Transverse colon (tissue), 4 donors: ENCODE measurements at regions of chr17 and their contacts with region 1.

Region 1: GRCh38 chr17:63611354-63611753 is 10.7 kb downstream of the TACO1 start:
- DNase-seq: no peak
- H3K4me3 ChIP-seq: no peak overlapping the region
- H3K27ac ChIP-seq: no peak overlapping the region
- H3K4me1 ChIP-seq: no peaks in the 10 kb centered on the region
- H3K27me3 ChIP-seq: no peaks in the 10 kb centered on the region
- CTCF ChIP-seq: no peak
- EP300 ChIP-seq: no peak
- POLR2A ChIP-seq: no peak

Region 2: GRCh38 chr17:63419949-63420867 is 191.1 kb before region 1 on chr17:
- in situ Hi-C with region 1: loop called in 3 of 4 experiments (anchors 5 to 10 kb)
- intact Hi-C with region 1: loop called (anchors 5 kb)
- DNase-seq: no peak
- H3K4me3 ChIP-seq: no peak overlapping the region
- H3K27ac ChIP-seq: no peak overlapping the region
- H3K4me1 ChIP-seq: no peaks in the 10 kb centered on the region
- H3K27me3 ChIP-seq: no peaks in the 10 kb centered on the region
- CTCF ChIP-seq: no peak
- EP300 ChIP-seq: no peak
- POLR2A ChIP-seq: no peak

Region 3: GRCh38 chr17:63425482-63425881 is 185.9 kb before region 1 on chr17:
- in situ Hi-C with region 1: loop called (anchors 5 to 10 kb)
- intact Hi-C with region 1: loop called (anchors 5 kb)
- DNase-seq: peak; percentile 74
- H3K4me3 ChIP-seq: no peak overlapping the region
- H3K27ac ChIP-seq: no peak overlapping the region
- H3K4me1 ChIP-seq: no peaks in the 10 kb centered on the region
- H3K27me3 ChIP-seq: no peaks in the 10 kb centered on the region
- CTCF ChIP-seq: peak; percentile 90 to 95 (median 94)
- EP300 ChIP-seq: no peak
- POLR2A ChIP-seq: no peak

Region 4: DNA sequence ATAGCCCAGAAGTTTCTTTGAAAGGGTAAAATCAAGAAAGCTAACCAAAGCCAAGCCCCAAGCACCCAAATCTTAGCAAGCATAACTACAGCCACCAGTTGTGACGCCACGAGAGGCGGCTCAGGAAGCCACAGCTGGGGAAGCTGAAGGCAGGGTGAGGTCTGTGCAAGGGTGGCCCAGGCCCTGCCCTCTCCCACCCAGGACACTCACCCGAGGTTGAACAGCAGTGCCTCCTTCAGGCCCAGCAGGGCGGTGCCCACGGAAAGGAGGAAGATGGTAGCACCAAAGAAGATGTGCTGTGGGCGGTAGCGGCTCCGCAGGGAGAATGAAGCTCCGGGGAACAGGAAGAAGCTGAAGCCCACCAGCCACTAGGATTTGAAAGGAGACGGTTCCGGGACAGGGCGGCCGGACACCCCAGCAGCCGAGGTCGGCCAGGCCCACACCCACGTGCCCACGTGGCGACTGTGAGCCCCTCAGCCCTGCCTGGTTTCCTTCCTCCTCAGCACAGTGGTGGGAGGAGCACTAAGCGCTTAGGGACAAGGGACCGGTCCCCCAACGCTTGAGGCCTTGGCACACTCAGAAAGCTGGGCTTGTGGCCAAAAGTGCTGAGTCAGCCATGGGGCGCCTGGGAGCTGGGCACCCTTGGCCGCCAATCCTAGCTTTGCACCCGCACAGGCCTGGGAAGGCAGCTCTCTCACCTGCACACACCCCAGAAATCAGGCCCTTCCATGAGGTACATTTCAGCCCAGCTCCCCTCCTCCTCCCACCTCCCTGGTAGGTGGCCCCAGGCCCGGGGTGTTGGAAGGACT is 176.3 kb before region 1 on chr17:
- in situ Hi-C with region 1: loop called in 1 of 4 experiments (anchors 5 kb)
- intact Hi-C with region 1: no loop called
- DNase-seq: peak; percentile 83
- H3K4me3 ChIP-seq: no peak overlapping the region
- H3K27ac ChIP-seq: peak overlapping the region; percentile 26 to 80 (median 77)
- H3K4me1 ChIP-seq: peaks cover 20 to 71% (median 54%) of the 10 kb centered on the region in 4 donors
- H3K27me3 ChIP-seq: no peaks in the 10 kb centered on the region
- CTCF ChIP-seq: peak in 2 of 5 experiments; percentile 11
- EP300 ChIP-seq: no peak
- POLR2A ChIP-seq: no peak

Region 5: DNA sequence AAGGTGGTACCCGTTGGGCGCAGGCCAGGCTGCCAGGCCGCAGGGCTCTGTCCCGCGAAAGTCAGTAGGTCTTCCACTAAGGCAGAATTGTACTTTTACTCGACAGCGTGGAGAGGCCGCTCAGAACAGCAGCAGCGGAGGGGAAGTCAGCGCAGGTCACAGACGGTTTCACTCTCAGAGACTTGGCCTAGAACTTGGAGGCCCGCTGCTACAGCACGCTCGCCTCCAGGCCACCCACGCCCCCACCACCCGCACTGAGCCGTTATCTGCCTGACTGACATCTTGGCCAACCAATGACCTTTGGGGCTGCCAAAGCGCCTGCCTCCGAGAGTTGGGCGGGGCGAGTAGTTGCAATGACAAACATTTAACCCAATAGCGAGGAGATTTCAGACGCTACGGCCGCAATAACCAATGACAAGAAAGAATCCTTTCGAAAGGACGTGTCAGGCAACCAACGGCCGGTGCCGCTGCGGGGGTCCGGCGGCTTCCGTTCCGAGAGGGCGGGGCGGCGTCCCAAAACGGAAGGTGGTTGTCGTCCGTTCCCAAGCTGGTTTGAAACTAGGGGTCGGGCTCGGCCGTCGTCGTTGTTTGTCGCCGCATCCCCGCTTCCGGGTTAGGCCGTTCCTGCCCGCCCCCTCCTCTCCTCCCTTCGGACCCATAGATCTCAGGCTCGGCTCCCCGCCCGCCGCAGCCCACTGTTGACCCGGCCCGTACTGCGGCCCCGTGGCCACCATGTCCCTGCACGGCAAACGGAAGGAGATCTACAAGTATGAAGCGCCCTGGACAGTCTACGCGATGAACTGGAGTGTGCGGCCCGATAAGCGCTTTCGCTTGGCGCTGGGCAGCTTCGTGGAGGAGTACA is 61.2 kb before region 1 on chr17 and contains the start of gene DCAF7:
- in situ Hi-C with region 1: loop called in 1 of 4 experiments (anchors 10 kb)
- intact Hi-C with region 1: no loop called
- DNase-seq: peak; percentile 99
- H3K4me3 ChIP-seq: peak within 1 kb of the TSS; percentile 75 to 99 (median 85)
- H3K27ac ChIP-seq: peak within 1 kb of the TSS; percentile 95 to 97 (median 96)
- H3K4me1 ChIP-seq: peaks cover 15 to 42% (median 22%) of the 10 kb centered on the region in 4 donors
- H3K27me3 ChIP-seq: no peaks in the 10 kb centered on the region
- CTCF ChIP-seq: no peak
- EP300 ChIP-seq: no peak
- POLR2A ChIP-seq: peak; percentile 81
- total RNA-seq, gene DCAF7: 29.2 to 42.9 (median 41.9) TPM

Region 6: GRCh38 chr17:63596856-63597586 is 14.3 kb before region 1 on chr17:
- in situ Hi-C with region 1: no loop called
- intact Hi-C with region 1: loop called (anchors 1 kb)
- DNase-seq: no peak
- H3K4me3 ChIP-seq: no peak overlapping the region
- H3K27ac ChIP-seq: no peak overlapping the region
- H3K4me1 ChIP-seq: peaks cover 11 to 20% (median 14%) of the 10 kb centered on the region in 4 donors
- H3K27me3 ChIP-seq: no peaks in the 10 kb centered on the region
- CTCF ChIP-seq: no peak
- EP300 ChIP-seq: no peak
- POLR2A ChIP-seq: no peak

Region 7: DNA sequence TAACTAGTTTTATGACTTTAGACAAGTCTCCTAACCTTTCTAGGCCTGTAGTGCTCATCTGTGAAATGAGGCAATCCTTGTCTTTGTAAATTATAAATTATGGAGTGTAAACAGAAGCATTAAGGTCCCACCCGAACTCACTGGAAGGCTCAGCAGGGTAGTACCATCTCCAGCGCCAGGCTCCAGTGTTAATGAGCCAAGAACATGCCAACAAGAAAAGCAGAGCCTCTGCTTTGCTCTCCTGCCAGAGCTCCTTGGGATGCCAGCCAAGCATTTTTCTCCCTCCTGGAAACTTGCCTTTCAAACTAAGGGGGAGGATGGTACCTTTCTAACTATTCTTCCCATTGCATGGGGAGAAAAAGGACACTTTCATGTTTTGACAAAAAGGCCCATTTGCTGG is 73.7 kb after region 1 on chr17:
- in situ Hi-C with region 1: no loop called
- intact Hi-C with region 1: no loop called
- DNase-seq: no peak
- H3K4me3 ChIP-seq: no peak overlapping the region
- H3K27ac ChIP-seq: peak overlapping the region in 3 of 4 donors; percentile 4 to 41 (median 9)
- H3K4me1 ChIP-seq: peaks cover 0 to 16% (median 3%) of the 10 kb centered on the region in 4 donors
- H3K27me3 ChIP-seq: no peaks in the 10 kb centered on the region
- CTCF ChIP-seq: no peak
- EP300 ChIP-seq: no peak
- POLR2A ChIP-seq: no peak